IMR-90 (cell line): ENCODE measurements at regions of chr4 and their contacts with region 1.

Region 1: GRCh38 chr4:40621592-40622512 is 7.8 kb downstream of the RBM47 start:
- DNase-seq: peak; percentile 98
- ATAC-seq: peak; percentile 95
- H3K4me3 ChIP-seq: no peak overlapping the region
- H3K27ac ChIP-seq: no peak overlapping the region
- H3K4me1 ChIP-seq: peaks cover 15% of the 10 kb centered on the region
- H3K27me3 ChIP-seq: no peaks in the 10 kb centered on the region; the same call in 1 of the 2 replicates
- CTCF ChIP-seq: no peak
- POLR2A ChIP-seq: no peak
- RAD21 ChIP-seq: no peak

Region 2: DNA sequence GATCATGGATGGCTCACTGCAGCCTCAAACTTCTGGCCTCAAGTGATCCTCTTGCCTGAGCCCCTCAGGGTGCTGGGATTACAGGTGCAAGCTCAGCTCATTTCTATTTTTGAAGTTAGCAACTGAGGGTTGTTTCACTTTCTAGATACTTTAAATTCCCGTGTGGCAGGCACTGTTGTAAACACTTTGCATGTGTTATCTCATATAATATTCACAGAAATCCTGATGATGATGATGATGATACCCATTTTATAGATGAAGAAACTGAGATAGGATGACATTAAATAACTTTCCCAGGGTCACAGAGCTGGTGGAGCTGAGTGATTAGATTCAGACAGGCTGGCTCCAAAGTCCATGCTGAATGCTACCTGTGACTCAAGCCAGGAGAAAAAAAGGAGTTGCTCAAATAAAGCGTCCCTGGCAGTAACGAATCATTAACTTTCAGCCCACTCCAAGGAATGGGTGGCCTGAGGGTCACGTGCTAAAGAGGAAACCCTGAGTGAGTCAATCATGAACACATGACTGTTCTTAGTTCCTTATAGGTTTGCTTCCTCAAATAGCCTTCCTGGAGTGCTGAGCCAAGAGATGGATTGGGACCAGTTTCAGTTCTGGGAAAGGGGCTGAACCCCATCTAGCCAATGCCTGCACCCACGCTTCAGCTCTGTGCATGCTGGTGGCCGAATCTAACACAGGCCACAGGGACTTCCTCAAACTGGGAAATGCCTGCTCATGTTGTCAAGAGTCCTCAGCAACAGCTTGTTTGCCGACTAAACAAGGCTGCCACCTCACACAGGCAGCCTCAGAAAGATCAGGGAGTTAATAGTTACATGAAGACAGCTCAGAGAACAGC is 45.0 kb before region 1 on chr4:
- CTCF ChIA-PET with region 1: no interaction called
- POLR2A ChIA-PET with region 1: no interaction called
- dilution Hi-C with region 1: no loop called
- in situ Hi-C with region 1: no loop called
- intact Hi-C with region 1: loop called (anchors 2 kb)
- DNase-seq: peak; percentile 91
- ATAC-seq: peak; percentile 82
- H3K4me3 ChIP-seq: peak overlapping the region; percentile 20; the same call in 1 of the 2 replicates
- H3K27ac ChIP-seq: peak overlapping the region; percentile 91
- H3K4me1 ChIP-seq: peaks cover 7% of the 10 kb centered on the region; the same call in 1 of the 2 replicates
- H3K27me3 ChIP-seq: no peaks in the 10 kb centered on the region
- CTCF ChIP-seq: no peak
- POLR2A ChIP-seq: no peak
- RAD21 ChIP-seq: no peak